HepG2 (cell line): ENCODE measurements at regions of chr10 and their contacts with region 1.

Region 1: GRCh38 chr10:118308664-118309063 is 33.5 kb downstream of the FAM204A start:
- DNase-seq: no peak
- ATAC-seq: peak; percentile 59; the same call in 2 of the 3 replicates
- H3K4me3 ChIP-seq: no peak overlapping the region
- H3K27ac ChIP-seq: no peak overlapping the region
- H3K4me1 ChIP-seq: no peaks in the 10 kb centered on the region
- H3K27me3 ChIP-seq: no peaks in the 10 kb centered on the region
- CTCF ChIP-seq: no peak
- EP300 ChIP-seq: no peak
- POLR2A ChIP-seq: no peak
- RAD21 ChIP-seq: no peak

Region 2: DNA sequence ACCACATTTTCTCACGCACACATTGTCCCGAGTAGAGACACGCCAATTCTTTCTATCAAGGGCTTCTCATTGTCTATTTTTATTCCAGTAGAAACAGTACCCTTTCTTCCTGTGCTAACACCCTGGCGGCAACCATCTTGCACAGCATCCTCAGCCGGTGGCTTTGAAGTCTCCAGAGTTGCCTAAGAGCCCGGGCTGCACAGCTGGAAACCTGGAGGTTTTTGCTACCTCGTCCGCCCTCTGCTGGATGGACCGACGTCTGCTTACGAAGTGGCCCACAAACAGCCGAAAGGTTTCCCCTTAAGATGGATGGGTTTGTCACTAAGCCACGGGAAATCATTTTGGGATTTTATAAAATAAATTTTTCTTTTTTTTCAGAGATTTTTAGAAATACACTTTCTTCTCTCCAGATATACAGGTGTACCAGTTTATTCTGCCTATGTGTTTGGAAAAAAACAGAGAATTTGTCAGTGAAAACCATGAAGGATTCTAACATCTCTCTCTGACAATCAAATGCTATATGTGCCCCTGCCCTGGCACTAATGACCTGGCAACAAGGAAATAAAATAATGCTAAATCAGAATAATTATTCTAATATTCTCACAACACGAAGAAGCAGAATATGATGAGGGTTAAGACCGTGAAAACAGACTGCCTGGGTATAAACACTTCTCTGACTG is 115.3 kb after region 1 on chr10:
- CTCF ChIA-PET with region 1: interaction called, 5 read pairs
- POLR2A ChIA-PET with region 1: no interaction called
- in situ Hi-C with region 1: no loop called
- intact Hi-C with region 1: loop called (anchors 2 kb)
- DNase-seq: peak; percentile 89
- ATAC-seq: peak; percentile 100
- H3K4me3 ChIP-seq: no peak overlapping the region
- H3K27ac ChIP-seq: no peak overlapping the region
- H3K4me1 ChIP-seq: no peaks in the 10 kb centered on the region
- H3K27me3 ChIP-seq: peaks cover 0 to 5% of the 10 kb centered on the region in 2 experiments; a peak in 1 of 5 replicates
- CTCF ChIP-seq: peak; percentile 81
- EP300 ChIP-seq: no peak
- POLR2A ChIP-seq: no peak
- RAD21 ChIP-seq: peak; percentile 70